ENCODE measurements at regions of chr19 and their contacts with region 1.

Region 1: DNA sequence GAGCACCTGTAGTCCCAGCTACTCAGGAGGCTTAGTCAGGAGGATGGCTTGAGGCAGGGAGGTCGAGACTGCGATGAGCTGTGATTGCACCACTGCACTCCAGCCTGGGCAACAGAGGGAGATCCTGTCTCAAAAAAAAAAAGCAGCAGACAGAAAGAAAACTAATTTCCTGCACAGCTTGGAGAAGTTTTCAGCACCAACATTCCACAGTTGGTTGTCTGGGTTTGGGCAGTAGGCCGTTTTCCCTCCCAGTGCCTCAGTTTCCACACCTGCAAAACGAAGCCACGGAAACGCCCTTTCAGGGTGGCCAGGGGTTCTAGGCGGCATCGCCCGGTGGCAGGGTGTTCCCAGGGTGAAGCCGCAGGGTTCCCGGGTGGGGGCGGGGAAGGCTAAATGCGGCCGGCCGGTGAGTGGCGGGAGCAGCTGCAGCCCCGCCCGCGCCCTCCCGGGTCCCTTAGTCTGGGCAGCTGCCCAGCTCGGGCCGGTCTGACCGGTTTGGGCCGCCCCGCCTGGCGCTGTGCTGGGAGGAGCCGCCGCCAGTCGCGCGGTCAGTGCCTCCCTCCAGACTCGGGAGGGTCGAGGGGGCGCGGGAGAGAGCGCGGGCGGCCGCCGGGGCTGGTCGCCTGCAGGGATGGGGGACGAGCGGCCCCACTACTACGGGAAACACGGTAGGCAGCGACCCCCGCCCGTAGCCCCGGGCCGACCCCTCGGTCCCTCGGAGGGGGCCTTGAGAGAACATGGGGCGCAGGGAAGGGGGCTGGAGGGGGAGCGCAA is at the start of gene SLC44A2:
- DNase-seq: peak; percentile 89
- total RNA-seq, gene SLC44A2: 114 TPM

Region 2: GRCh38 chr19:10533646-10534386 is 91.4 kb before region 1 on chr19:
- intact Hi-C with region 1: no loop called
- DNase-seq: no peak

Region 3: GRCh38 chr19:10612491-10613119 is 12.6 kb before region 1 on chr19:
- intact Hi-C with region 1: loop called (anchors 1 kb)
- DNase-seq: peak; percentile 94

Region 4: GRCh38 chr19:10742476-10742875 is 117.3 kb after region 1 on chr19:
- intact Hi-C with region 1: no loop called
- DNase-seq: no peak